HCT116 (cell line): ENCODE measurements at regions of chr21 and their contacts with region 1.

Region 1: DNA sequence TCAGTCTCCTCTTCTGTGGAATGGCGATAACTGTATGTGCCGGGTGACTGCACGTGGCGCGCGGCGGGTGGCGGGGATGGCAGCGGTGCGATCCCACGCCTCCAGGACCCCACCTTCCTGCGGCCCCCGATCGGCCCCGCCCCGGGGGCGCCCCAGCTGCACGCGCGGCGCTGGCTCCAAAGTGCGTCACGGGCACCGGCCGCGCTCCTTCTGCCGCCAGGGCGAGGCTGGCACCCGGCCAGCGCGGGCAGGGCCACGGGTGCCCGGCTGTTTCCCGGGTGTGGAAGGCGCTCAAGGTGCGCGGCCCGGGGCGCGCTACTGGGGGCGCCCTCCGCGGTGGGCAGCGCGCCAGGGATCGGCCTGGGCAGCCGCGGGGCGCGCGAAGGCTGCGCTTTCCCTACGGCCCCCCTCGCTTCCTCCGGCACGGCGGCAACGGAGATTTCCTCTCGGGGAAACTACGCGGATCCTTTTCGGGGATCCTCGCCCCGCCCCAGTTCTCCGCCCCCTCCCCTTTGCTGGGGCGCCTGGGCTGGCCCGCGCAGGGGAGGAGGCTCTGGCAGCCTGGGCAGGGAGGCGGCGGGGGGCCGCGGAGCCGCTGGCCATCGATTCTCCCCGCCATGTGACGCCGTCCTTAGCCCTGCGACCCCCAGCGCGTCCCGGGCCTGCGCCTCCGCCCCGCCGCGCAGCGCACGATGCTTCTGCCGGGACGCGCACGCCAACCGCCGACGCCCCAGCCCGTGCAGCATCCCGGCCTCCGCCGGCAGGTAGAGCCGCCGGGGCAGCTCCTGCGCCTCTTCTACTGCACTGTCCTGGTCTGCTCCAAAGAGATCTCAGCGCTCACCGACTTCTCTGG is at the start of gene EVA1C:
- DNase-seq: no peak
- ATAC-seq: peak; percentile 65
- H3K4me3 ChIP-seq: peak within 1 kb of the TSS; percentile 77 to 85
- H3K27ac ChIP-seq: peak within 1 kb of the TSS; percentile 98
- H3K4me1 ChIP-seq: peaks cover 29 to 43% of the 10 kb centered on the region in 2 experiments; a peak in 3 of 4 replicates
- H3K27me3 ChIP-seq: no peaks in the 10 kb centered on the region
- CTCF ChIP-seq: 0 out of 6 replicates have a peak, but pooled peaks of 2 of the 3 experiments have one; percentile 5 to 14
- POLR2A ChIP-seq: no peak
- RAD21 ChIP-seq: no peak
- total RNA-seq, gene EVA1C: 29.3 TPM

Region 2: DNA sequence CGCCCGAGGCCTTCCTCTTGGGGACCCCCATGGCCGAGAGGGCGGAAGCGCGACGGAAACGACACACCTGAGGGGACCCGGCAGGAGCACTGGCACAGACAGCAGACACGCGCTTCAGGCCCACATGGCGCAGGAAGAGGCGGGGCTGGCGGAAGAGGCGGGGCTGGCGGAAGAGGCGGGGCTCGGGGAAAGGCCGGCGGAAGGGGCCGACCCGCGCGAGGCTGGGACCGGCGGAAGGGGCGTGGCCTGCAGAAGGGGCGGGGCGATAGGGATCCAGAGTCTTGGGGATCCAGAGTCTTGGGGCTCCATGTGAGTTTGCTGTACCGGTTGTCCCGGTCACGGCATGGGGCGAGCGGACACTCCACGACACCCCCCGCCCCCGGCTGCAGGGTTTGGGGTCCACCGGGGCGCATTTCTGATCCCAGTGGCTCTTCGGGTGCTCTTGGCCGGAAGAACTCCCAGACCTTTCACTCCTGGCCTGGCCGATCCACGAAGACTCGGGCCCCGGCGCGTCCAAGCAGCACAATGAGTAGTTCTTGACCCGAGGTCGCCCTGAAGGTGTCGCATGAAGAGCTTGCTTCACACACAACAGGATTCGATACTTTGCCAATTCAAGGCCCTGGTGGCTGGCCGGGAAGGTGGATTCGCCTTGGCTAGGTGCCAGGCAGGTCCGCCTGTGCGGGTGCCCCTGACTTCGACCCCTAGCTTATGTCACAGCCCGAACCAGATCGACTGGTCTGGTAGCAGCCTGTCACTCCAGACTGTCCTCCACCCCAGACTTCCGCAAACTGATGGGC is 19.3 kb before region 1 on chr21 and contains the start of gene URB1:
- CTCF ChIA-PET with region 1: interaction called, 5 read pairs
- POLR2A ChIA-PET with region 1: interaction called, 4 read pairs
- RAD21 ChIA-PET with region 1: no interaction called
- intact Hi-C with region 1: loop called (anchors 1 kb)
- DNase-seq: peak; percentile 49
- ATAC-seq: peak; percentile 90
- H3K4me3 ChIP-seq: peak within 1 kb of the TSS; percentile 97
- H3K27ac ChIP-seq: peak within 1 kb of the TSS; percentile 84
- H3K4me1 ChIP-seq: peaks cover 13 to 18% of the 10 kb centered on the region in 2 experiments; a peak in 3 of 4 replicates
- H3K27me3 ChIP-seq: no peaks in the 10 kb centered on the region
- CTCF ChIP-seq: no peak; a peak in 1 of 6 replicates
- POLR2A ChIP-seq: peak; percentile 72
- RAD21 ChIP-seq: no peak
- total RNA-seq, gene URB1: 28.3 TPM

Region 3: DNA sequence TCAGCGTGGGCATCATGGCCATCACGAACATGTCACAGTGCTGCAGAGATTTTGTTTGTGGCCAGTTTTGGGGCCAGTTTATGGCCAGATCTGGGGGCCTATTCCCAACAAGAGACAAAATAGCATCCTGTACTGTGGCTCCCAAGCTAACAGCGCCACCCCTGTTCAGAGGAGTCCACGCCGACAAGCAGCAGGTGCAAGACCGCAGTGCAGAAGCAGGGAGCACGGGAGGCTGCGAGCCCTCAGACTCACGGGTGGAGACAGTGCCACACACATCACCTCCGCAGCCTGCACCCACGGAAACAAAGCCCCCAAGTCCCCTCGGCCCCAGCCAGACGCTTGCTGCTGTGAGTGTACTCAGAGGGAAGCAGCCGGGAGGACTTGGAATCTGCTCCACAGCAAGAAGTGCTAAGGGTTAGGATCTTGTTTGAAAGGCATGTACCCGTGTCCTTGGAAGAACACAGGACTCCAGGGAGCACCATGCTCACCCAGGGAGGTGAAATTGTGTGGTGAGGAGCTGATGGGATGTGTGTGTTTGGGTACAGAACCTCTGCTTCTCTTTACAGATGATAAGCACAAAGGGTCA is 165.8 kb after region 1 on chr21:
- CTCF ChIA-PET with region 1: interaction called, 3 read pairs
- POLR2A ChIA-PET with region 1: no interaction called
- RAD21 ChIA-PET with region 1: no interaction called
- intact Hi-C with region 1: loop called (anchors 1 kb)
- DNase-seq: peak; percentile 18
- ATAC-seq: peak; percentile 99
- H3K4me3 ChIP-seq: peak overlapping the region in 1 of 2 experiments; percentile 28; a peak in 2 of 4 replicates
- H3K27ac ChIP-seq: no peak overlapping the region
- H3K4me1 ChIP-seq: peaks cover 0 to 4% of the 10 kb centered on the region in 2 experiments; a peak in 1 of 4 replicates
- H3K27me3 ChIP-seq: peaks cover 11% of the 10 kb centered on the region; the same call in 1 of the 2 replicates
- CTCF ChIP-seq: peak; percentile 50 to 78 (median 69); a peak in 5 of 6 replicates
- POLR2A ChIP-seq: no peak
- RAD21 ChIP-seq: peak; percentile 76

Region 4: DNA sequence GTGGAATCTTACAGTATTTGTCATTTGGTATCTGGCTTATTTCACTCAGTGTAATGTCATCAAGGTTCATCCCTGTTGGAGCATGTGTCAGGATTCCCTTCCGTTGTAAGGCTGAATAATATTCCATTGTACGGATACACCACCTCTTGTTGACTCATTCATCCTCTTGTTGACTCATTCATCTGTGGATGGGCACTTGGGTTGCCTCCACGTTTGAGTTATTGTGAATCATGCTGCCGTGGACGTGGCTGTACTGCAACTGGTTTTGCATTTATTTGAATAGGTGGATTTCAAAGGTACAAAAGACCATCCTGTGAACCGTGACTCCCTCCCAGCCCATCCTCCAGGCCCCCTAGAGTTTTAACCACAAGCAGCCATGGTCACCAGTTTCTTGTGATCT is 184.8 kb after region 1 on chr21:
- CTCF ChIA-PET with region 1: interaction called, 22 read pairs
- POLR2A ChIA-PET with region 1: interaction called, 3 read pairs
- RAD21 ChIA-PET with region 1: no interaction called
- intact Hi-C with region 1: no loop called
- DNase-seq: peak; percentile 77
- ATAC-seq: peak; percentile 80
- H3K4me3 ChIP-seq: no peak overlapping the region; a peak in 1 of 4 replicates
- H3K27ac ChIP-seq: no peak overlapping the region
- H3K4me1 ChIP-seq: peaks cover 3 to 14% of the 10 kb centered on the region in 2 experiments; a peak in 3 of 4 replicates
- H3K27me3 ChIP-seq: no peaks in the 10 kb centered on the region
- CTCF ChIP-seq: no peak
- POLR2A ChIP-seq: no peak
- RAD21 ChIP-seq: peak; percentile 12; the same call in 1 of the 2 replicates

Region 5: GRCh38 chr21:32604464-32604863 is 192.1 kb after region 1 on chr21:
- CTCF ChIA-PET with region 1: interaction called, 22 read pairs
- POLR2A ChIA-PET with region 1: interaction called, 3 read pairs
- RAD21 ChIA-PET with region 1: no interaction called
- intact Hi-C with region 1: no loop called
- DNase-seq: no peak
- ATAC-seq: no peak
- H3K4me3 ChIP-seq: no peak overlapping the region
- H3K27ac ChIP-seq: no peak overlapping the region
- H3K4me1 ChIP-seq: no peaks in the 10 kb centered on the region
- H3K27me3 ChIP-seq: no peaks in the 10 kb centered on the region
- CTCF ChIP-seq: no peak
- POLR2A ChIP-seq: no peak
- RAD21 ChIP-seq: no peak